ENCODE measurements at regions of chr3 and their contacts with region 1.

Region 1: DNA sequence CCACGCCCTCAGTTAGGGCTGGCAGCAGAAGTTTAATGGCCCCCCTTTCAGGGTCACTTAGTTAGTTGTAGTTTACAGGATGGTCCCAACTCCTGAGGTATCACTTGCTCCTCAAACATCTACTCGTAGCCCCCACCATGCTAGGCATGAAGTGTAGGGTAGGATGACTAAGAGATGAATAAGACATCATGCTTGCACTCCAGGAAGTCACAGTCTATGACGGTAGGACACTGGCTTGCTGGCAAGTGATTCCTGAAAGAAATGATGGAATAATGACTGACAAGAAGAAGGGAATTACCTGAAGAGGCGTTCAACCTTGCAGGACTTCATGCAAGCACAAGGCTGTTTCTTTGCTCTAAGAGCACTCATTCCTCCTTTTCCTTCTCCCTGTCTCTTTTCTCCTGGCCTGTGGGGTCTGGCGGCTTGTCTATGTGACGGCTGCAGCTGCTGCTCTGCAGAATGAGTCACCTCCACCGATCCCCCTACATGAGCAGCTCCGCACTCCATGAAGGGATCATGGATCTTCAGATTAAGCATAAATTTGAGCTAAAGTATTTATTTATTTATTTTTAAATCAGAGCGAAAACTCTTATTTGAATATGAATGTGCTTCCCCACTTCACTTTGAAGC is 82.9 kb upstream of the BOC start:
- DNase-seq: no peak
- H3K4me3 ChIP-seq: no peak overlapping the region
- H3K27ac ChIP-seq: no peak overlapping the region
- H3K4me1 ChIP-seq: no peaks in the 10 kb centered on the region
- H3K27me3 ChIP-seq: no peaks in the 10 kb centered on the region
- CTCF ChIP-seq: no peak

Region 2: GRCh38 chr3:113019182-113020137 is 109.0 kb before region 1 on chr3:
- CTCF ChIA-PET with region 1: no interaction called
- POLR2A ChIA-PET with region 1: no interaction called
- intact Hi-C with region 1: no loop called
- DNase-seq: peak; percentile 80 to 81
- H3K4me3 ChIP-seq: peak overlapping the region; percentile 87
- H3K27ac ChIP-seq: peak overlapping the region; percentile 76
- H3K4me1 ChIP-seq: peaks cover 14% of the 10 kb centered on the region
- H3K27me3 ChIP-seq: no peaks in the 10 kb centered on the region
- CTCF ChIP-seq: no peak

Region 3: GRCh38 chr3:113111011-113111707 is 17.3 kb before region 1 on chr3:
- CTCF ChIA-PET with region 1: no interaction called
- POLR2A ChIA-PET with region 1: no interaction called
- intact Hi-C with region 1: loop called (anchors 1 kb)
- DNase-seq: peak; percentile 21 to 63
- H3K4me3 ChIP-seq: no peak overlapping the region
- H3K27ac ChIP-seq: no peak overlapping the region
- H3K4me1 ChIP-seq: peaks cover 8% of the 10 kb centered on the region; the same call in 1 of the 2 replicates
- H3K27me3 ChIP-seq: no peaks in the 10 kb centered on the region
- CTCF ChIP-seq: no peak

Measured in PC-9 (cell line).